Gastrocnemius medialis (tissue), 4 donors: ENCODE measurements at regions of chr10 and their contacts with region 1.

Region 1: GRCh38 chr10:91163269-91163868 is 57.1 kb upstream of the PCGF5 start:
- DNase-seq: peak; percentile 14 to 46
- ATAC-seq: peak; percentile 39 to 48
- H3K4me3 ChIP-seq: peak overlapping the region; percentile 60 to 87 (median 78)
- H3K27ac ChIP-seq: peak overlapping the region; percentile 85 to 98 (median 96)
- H3K4me1 ChIP-seq: peaks cover 3 to 13% of the 10 kb centered on the region in 2 donors
- H3K27me3 ChIP-seq: no peaks in the 10 kb centered on the region
- CTCF ChIP-seq: peak in 3 of 5 experiments; percentile 6 to 18 (median 14)
- POLR2A ChIP-seq: peak; percentile 46 to 55

Region 2: GRCh38 chr10:90148116-90148855 is 1015.1 kb before region 1 on chr10:
- in situ Hi-C with region 1: no loop called
- intact Hi-C with region 1: no loop called
- DNase-seq: no peak
- ATAC-seq: no peak
- H3K4me3 ChIP-seq: no peak overlapping the region
- H3K27ac ChIP-seq: no peak overlapping the region
- H3K4me1 ChIP-seq: no peaks in the 10 kb centered on the region
- H3K27me3 ChIP-seq: no peaks in the 10 kb centered on the region
- CTCF ChIP-seq: no peak
- POLR2A ChIP-seq: no peak

Region 3: GRCh38 chr10:90920986-90921666 is 242.2 kb before region 1 on chr10 and contains the start of gene ANKRD1:
- in situ Hi-C with region 1: no loop called
- intact Hi-C with region 1: loop called (anchors 2 kb)
- DNase-seq: peak; percentile 69 to 88
- ATAC-seq: peak; percentile 94 to 95
- H3K4me3 ChIP-seq: peak within 1 kb of the TSS in 3 of 4 donors; percentile 26 to 43 (median 36)
- H3K27ac ChIP-seq: peak within 1 kb of the TSS; percentile 78 to 87 (median 84)
- H3K4me1 ChIP-seq: peaks cover 47 to 49% of the 10 kb centered on the region in 2 donors
- H3K27me3 ChIP-seq: no peaks in the 10 kb centered on the region
- CTCF ChIP-seq: no peak
- POLR2A ChIP-seq: peak in 1 of 2 donors; percentile 40
- total RNA-seq, gene ANKRD1: 18.6 to 168 (median 98.5) TPM

Region 4: GRCh38 chr10:91190876-91191583 is 27.7 kb after region 1 on chr10:
- in situ Hi-C with region 1: no loop called
- intact Hi-C with region 1: loop called (anchors 2 kb)
- DNase-seq: peak; percentile 48 to 53
- ATAC-seq: peak; percentile 98
- H3K4me3 ChIP-seq: no peak overlapping the region
- H3K27ac ChIP-seq: peak overlapping the region; percentile 52 to 83 (median 72)
- H3K4me1 ChIP-seq: peaks cover 40 to 46% of the 10 kb centered on the region in 2 donors
- H3K27me3 ChIP-seq: no peaks in the 10 kb centered on the region
- CTCF ChIP-seq: no peak
- POLR2A ChIP-seq: peak in 1 of 2 donors; percentile 13

Region 5: GRCh38 chr10:91210435-91210834 is 47.1 kb after region 1 on chr10:
- in situ Hi-C with region 1: loop called in 3 of 4 experiments (anchors 10 kb)
- intact Hi-C with region 1: no loop called
- DNase-seq: no peak
- ATAC-seq: no peak
- H3K4me3 ChIP-seq: no peak overlapping the region
- H3K27ac ChIP-seq: no peak overlapping the region
- H3K4me1 ChIP-seq: peaks cover 22 to 27% of the 10 kb centered on the region in 2 donors
- H3K27me3 ChIP-seq: no peaks in the 10 kb centered on the region
- CTCF ChIP-seq: no peak
- POLR2A ChIP-seq: no peak

Region 6: GRCh38 chr10:91220194-91220953 is 57.0 kb after region 1 on chr10 and contains the start of gene PCGF5:
- in situ Hi-C with region 1: loop called in 3 of 4 experiments (anchors 10 kb)
- intact Hi-C with region 1: loop called (anchors 1 kb)
- DNase-seq: peak; percentile 80 to 92
- ATAC-seq: peak; percentile 85 to 92
- H3K4me3 ChIP-seq: peak within 1 kb of the TSS; percentile 76 to 88 (median 82)
- H3K27ac ChIP-seq: peak within 1 kb of the TSS; percentile 88 to 95 (median 92)
- H3K4me1 ChIP-seq: peaks cover 36 to 55% of the 10 kb centered on the region in 2 donors
- H3K27me3 ChIP-seq: no peaks in the 10 kb centered on the region
- CTCF ChIP-seq: peak; percentile 42 to 69 (median 57)
- POLR2A ChIP-seq: peak; percentile 56 to 86
- total RNA-seq, gene PCGF5: 46.2 to 63.5 (median 49.1) TPM

Region 7: GRCh38 chr10:91340613-91341362 is 177.4 kb after region 1 on chr10:
- in situ Hi-C with region 1: no loop called
- intact Hi-C with region 1: loop called (anchors 1 kb)
- DNase-seq: peak; percentile 78 to 81
- ATAC-seq: peak; percentile 97 to 99
- H3K4me3 ChIP-seq: no peak overlapping the region
- H3K27ac ChIP-seq: peak overlapping the region; percentile 73 to 86 (median 82)
- H3K4me1 ChIP-seq: peaks cover 26 to 32% of the 10 kb centered on the region in 2 donors
- H3K27me3 ChIP-seq: no peaks in the 10 kb centered on the region
- CTCF ChIP-seq: peak in 1 of 5 experiments; percentile 18
- POLR2A ChIP-seq: no peak